Right cardiac atrium (tissue), 5 donors: ENCODE measurements at regions of chr11 and their contacts with region 1.

Region 1: DNA sequence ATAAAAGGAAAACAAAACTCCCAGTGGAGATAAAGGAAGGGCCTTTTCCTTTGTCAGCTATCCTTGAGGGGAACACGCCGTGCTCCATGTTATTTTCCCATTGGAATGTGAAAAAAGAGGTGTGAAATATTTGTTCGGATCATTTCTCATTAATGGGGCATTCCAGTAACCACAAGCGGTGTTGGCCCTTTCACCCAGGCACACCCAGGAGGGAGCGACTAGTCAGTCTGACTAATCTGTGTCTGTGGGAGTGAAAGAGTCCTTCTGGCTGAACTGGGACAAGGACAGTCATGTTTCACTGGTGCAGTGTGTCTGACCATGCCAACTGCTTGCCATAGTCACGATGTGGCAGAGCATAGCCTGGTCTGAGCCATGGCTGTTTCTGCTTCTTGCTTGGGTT is 13.0 kb upstream of the MYEOV start:
- DNase-seq: peak in 2 of 3 donors; percentile 72 to 73
- ATAC-seq: peak; percentile 65 to 85
- H3K4me3 ChIP-seq: no peak overlapping the region
- H3K27ac ChIP-seq: no peak overlapping the region
- H3K4me1 ChIP-seq: peaks cover 5% of the 10 kb centered on the region
- H3K27me3 ChIP-seq: no peaks in the 10 kb centered on the region

Region 2: GRCh38 chr11:69115586-69116560 is 165.1 kb before region 1 on chr11:
- intact Hi-C with region 1: loop called in 1 of 4 experiments (anchors 10 kb)
- DNase-seq: peak; percentile 60 to 88 (median 83)
- ATAC-seq: peak; percentile 81 to 88
- H3K4me3 ChIP-seq: no peak overlapping the region
- H3K27ac ChIP-seq: no peak overlapping the region
- H3K4me1 ChIP-seq: no peaks in the 10 kb centered on the region
- H3K27me3 ChIP-seq: no peaks in the 10 kb centered on the region

Region 3: GRCh38 chr11:69131644-69132300 is 149.2 kb before region 1 on chr11:
- intact Hi-C with region 1: loop called in 1 of 4 experiments (anchors 10 kb)
- DNase-seq: peak; percentile 68 to 86 (median 78)
- ATAC-seq: peak; percentile 73 to 82
- H3K4me3 ChIP-seq: no peak overlapping the region
- H3K27ac ChIP-seq: no peak overlapping the region
- H3K4me1 ChIP-seq: peaks cover under 1% of the 10 kb centered on the region
- H3K27me3 ChIP-seq: no peaks in the 10 kb centered on the region